Right cardiac atrium (tissue), 5 donors: ENCODE measurements at regions of chr16 and their contacts with region 1.

Region 1: DNA sequence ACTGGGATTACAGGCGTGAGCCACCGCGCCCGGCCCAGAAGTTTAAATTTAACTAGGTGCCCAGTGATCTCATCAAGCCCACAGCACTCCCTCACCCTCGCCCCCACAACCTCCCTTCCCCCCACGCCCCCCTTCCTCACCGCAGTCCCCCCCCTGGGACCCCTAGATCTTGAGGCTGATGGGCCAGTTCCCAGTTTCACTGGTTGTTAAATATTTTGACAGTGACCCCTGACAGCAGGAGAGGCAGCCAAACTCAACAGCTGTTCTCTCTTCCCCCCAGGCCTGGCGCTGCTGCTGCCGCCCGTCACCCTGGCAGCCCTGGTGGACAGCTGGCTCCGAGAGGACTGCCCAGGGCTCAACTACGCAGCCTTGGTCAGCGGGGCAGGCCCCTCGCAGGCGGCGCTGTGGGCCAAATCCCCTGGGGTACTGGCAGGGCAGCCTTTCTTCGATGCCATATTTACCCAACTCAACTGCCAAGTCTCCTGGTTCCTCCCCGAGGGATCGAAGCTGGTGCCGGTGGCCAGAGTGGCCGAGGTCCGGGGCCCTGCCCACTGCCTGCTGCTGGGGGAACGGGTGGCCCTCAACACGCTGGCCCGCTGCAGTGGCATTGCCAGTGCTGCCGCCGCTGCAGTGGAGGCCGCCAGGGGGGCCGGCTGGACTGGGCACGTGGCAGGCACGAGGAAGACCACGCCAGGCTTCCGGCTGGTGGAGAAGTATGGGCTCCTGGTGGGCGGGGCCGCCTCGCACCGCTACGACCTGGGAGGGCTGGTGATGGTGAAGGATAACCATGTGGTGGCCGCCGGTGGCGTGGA is 15.6 kb downstream of the QPRT start:
- DNase-seq: peak; percentile 39 to 74 (median 61)
- ATAC-seq: peak; percentile 48 to 58
- H3K4me3 ChIP-seq: no peak overlapping the region
- H3K27ac ChIP-seq: no peak overlapping the region
- H3K4me1 ChIP-seq: no peaks in the 10 kb centered on the region
- H3K27me3 ChIP-seq: no peaks in the 10 kb centered on the region

Region 2: GRCh38 chr16:28549390-28549789 is 1145.2 kb before region 1 on chr16:
- intact Hi-C with region 1: no loop called
- DNase-seq: no peak
- ATAC-seq: no peak
- H3K4me3 ChIP-seq: no peak overlapping the region
- H3K27ac ChIP-seq: no peak overlapping the region
- H3K4me1 ChIP-seq: peaks cover under 1% of the 10 kb centered on the region
- H3K27me3 ChIP-seq: no peaks in the 10 kb centered on the region

Region 3: DNA sequence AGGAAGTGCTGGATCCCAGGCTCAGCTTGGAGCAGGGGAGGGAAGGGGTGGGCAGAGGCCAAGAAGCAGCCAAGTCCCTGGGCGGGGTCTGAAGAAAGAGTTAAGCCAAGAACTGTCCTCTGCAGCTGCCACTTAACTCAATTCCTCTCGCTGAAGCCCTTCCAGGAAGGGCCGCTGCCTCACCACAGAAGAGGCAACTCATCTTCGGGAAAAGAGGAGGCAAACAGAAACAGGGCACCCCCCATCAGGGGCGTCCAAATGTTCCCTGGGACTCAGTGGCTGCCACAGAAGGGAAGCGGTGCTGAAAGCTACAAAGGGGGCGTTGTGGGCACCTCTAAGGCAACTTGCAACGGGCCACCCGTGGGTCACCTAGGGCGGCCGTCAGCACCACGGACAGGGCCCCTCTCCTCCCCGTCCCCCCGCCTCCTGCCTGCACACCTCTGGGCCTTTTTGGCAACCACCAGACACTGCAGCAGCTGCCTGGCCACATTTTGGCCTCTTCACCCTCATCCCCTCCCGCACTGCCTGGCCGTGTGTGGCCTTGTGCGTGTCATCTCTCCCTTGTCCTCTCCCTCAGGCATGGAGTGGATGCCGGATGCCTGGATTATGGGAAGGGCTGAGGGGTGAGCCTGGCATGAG is 334.0 kb after region 1 on chr16:
- intact Hi-C with region 1: loop called in 2 of 4 experiments (anchors 10 kb)
- DNase-seq: peak in 1 of 3 donors; percentile 62
- ATAC-seq: peak in 1 of 2 donors; percentile 27
- H3K4me3 ChIP-seq: no peak overlapping the region
- H3K27ac ChIP-seq: no peak overlapping the region
- H3K4me1 ChIP-seq: no peaks in the 10 kb centered on the region
- H3K27me3 ChIP-seq: no peaks in the 10 kb centered on the region